Activated CD4-positive, alpha-beta memory T cell treated with anti-CD3 and anti-CD28 coated beads for 36 hours (primary cell): ENCODE measurements at regions of chr17 and their contacts with region 1.

Region 1: DNA sequence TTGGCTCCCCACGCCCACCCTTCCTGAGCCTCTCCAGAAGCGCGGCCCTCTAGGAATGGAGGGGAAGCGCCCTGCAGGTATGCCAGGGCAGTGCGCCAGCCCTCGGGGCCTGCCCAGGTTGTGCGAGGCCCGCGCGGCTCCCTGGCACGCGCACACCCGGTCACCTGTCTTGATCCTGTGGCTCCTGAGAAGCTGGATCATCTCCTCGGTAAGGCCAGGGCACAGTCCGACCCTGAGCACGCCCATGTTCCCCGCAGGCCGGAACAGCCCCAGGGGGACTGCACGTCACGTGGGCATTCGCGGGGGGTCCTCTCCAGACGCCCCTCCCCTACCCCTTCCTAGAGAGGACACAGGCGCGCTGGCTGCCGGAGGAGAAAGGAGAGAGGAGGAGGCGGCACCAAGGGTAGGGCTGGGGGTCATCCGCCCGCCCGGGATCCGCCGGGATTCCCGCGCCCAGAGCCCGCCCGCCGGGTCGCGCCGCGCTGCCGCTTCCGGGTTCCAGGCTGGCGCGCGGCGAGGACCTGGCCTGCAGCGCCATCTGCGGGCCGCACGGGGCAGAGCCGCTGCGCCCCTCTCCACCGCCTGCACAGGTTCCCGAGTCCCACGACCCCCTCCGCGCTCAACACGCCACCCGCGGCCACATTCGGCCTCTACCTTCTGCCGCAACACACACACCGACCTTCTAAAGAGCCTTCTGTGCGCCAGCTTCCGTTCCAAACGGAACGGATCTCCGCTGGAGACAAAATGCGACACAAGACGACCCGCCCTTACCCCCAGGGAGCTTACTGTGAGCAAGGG is at the start of gene RAD51D:
- DNase-seq: peak; percentile 85
- H3K4me3 Mint-ChIP-seq: peak within 1 kb of the TSS; percentile 86
- H3K27ac Mint-ChIP-seq: peak within 1 kb of the TSS; percentile 84
- H3K4me1 Mint-ChIP-seq: peaks cover 40% of the 10 kb centered on the region
- H3K27me3 Mint-ChIP-seq: no peaks in the 10 kb centered on the region
- total RNA-seq, gene RAD51D: 29.7 to 36.7 TPM

Region 2: GRCh38 chr17:34275881-34276280 is 843.7 kb before region 1 on chr17:
- CTCF ChIA-PET with region 1: no interaction called
- POLR2A ChIA-PET with region 1: no interaction called
- intact Hi-C with region 1: no loop called
- DNase-seq: no peak
- H3K4me3 Mint-ChIP-seq: no peak overlapping the region
- H3K27ac Mint-ChIP-seq: no peak overlapping the region
- H3K4me1 Mint-ChIP-seq: no peaks in the 10 kb centered on the region
- H3K27me3 Mint-ChIP-seq: peaks cover 56% of the 10 kb centered on the region

Region 3: GRCh38 chr17:34420254-34420766 is 699.3 kb before region 1 on chr17:
- CTCF ChIA-PET with region 1: interaction called, 30 read pairs
- POLR2A ChIA-PET with region 1: no interaction called
- intact Hi-C with region 1: loop called (anchors 2 kb)
- DNase-seq: peak; percentile 73
- H3K4me3 Mint-ChIP-seq: no peak overlapping the region
- H3K27ac Mint-ChIP-seq: no peak overlapping the region
- H3K4me1 Mint-ChIP-seq: peaks cover 3% of the 10 kb centered on the region
- H3K27me3 Mint-ChIP-seq: peaks cover 25% of the 10 kb centered on the region

Region 4: GRCh38 chr17:34980681-34981537 is 138.7 kb before region 1 on chr17:
- CTCF ChIA-PET with region 1: interaction called, 30 read pairs
- POLR2A ChIA-PET with region 1: interaction called, 4 read pairs
- intact Hi-C with region 1: loop called (anchors 2 kb)
- DNase-seq: peak; percentile 78
- H3K4me3 Mint-ChIP-seq: peak overlapping the region; percentile 90
- H3K27ac Mint-ChIP-seq: peak overlapping the region; percentile 93
- H3K4me1 Mint-ChIP-seq: peaks cover 52% of the 10 kb centered on the region
- H3K27me3 Mint-ChIP-seq: no peaks in the 10 kb centered on the region

Region 5: GRCh38 chr17:34998205-34998604 is 121.4 kb before region 1 on chr17:
- CTCF ChIA-PET with region 1: interaction called, 159 read pairs
- POLR2A ChIA-PET with region 1: interaction called, 4 read pairs
- intact Hi-C with region 1: loop called (anchors 1 kb)
- DNase-seq: peak; percentile 90
- H3K4me3 Mint-ChIP-seq: no peak overlapping the region
- H3K27ac Mint-ChIP-seq: peak overlapping the region; percentile 5
- H3K4me1 Mint-ChIP-seq: peaks cover 5% of the 10 kb centered on the region
- H3K27me3 Mint-ChIP-seq: no peaks in the 10 kb centered on the region

Region 6: GRCh38 chr17:35094902-35095301 is 24.7 kb before region 1 on chr17:
- CTCF ChIA-PET with region 1: interaction called, 34 read pairs
- POLR2A ChIA-PET with region 1: interaction called, 6 read pairs
- intact Hi-C with region 1: no loop called
- DNase-seq: no peak
- H3K4me3 Mint-ChIP-seq: no peak overlapping the region
- H3K27ac Mint-ChIP-seq: no peak overlapping the region
- H3K4me1 Mint-ChIP-seq: peaks cover 13% of the 10 kb centered on the region
- H3K27me3 Mint-ChIP-seq: no peaks in the 10 kb centered on the region